ENCODE measurements at regions of chr1 and their contacts with region 1.

Region 1: DNA sequence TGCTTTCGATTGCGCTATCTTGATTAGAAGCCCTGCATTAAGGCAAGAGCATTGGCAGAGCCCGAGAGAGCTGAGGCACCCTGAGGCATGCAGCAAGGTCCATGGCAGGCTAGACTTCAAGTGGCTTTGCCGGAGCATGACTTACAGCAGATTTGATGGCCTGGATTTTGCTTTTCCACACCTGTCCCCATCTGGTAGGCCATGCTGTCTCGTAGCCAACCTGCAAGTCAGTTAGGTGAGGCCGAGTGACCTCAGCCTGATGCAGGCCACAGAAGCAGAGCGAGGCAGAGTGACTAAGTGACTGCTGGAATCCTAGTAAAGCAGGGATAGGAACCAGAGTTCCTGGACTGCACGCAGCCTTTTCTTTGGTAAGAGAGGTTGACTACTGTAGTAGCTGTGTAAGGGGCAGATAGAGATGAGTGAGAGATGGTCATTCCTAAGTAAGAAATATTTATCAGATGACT is 148.9 kb downstream of the PBX1 start:
- DNase-seq: no peak
- ATAC-seq: peak in 6 of 8 donors; percentile 22 to 79 (median 55)
- H3K4me3 ChIP-seq: no peak overlapping the region
- H3K27ac ChIP-seq: peak overlapping the region in 9 of 10 donors; percentile 10 to 71 (median 66)
- H3K4me1 ChIP-seq: peaks cover 19 to 89% (median 66%) of the 10 kb centered on the region in 9 donors
- H3K27me3 ChIP-seq: peaks cover 0 to 5% (median 0%) of the 10 kb centered on the region in 7 donors
- CTCF ChIP-seq: no peak

Region 2: DNA sequence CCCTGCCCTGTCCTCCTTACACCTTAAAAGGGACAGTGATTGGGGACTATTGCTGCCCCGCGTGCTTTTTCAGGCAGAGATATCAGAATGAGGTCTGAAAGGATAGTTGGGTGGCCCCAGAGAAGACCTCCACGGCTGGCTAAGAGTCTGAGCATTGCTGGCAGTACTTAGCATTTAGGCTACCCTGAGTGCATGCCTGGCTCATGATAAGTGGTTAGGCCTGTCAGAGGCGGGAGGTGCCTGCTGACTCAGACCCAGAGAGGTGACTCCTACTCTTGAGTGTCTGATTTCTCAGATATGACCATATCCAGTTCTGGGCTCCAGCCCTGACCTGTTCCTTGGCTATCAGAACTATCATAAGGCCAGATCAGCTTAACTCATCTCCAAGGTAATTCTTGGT is 64.7 kb after region 1 on chr1:
- intact Hi-C with region 1: loop called in 3 of 10 experiments (anchors 5 to 10 kb)
- DNase-seq: peak; percentile 45 to 55
- ATAC-seq: peak; percentile 66 to 94 (median 86)
- H3K4me3 ChIP-seq: no peak overlapping the region
- H3K27ac ChIP-seq: peak overlapping the region in 9 of 10 donors; percentile 1 to 73 (median 57)
- H3K4me1 ChIP-seq: peaks cover 9 to 77% (median 48%) of the 10 kb centered on the region in 9 donors
- H3K27me3 ChIP-seq: no peaks in the 10 kb centered on the region
- CTCF ChIP-seq: no peak

Region 3: GRCh38 chr1:164780863-164781262 is 73.0 kb after region 1 on chr1:
- intact Hi-C with region 1: loop called in 7 of 10 experiments (anchors 5 to 10 kb)
- DNase-seq: peak in 1 of 2 donors; percentile 24
- ATAC-seq: peak; percentile 40 to 93 (median 68)
- H3K4me3 ChIP-seq: no peak overlapping the region
- H3K27ac ChIP-seq: peak overlapping the region in 9 of 10 donors; percentile 35 to 80 (median 62)
- H3K4me1 ChIP-seq: peaks cover 12 to 67% (median 48%) of the 10 kb centered on the region in 9 donors
- H3K27me3 ChIP-seq: no peaks in the 10 kb centered on the region
- CTCF ChIP-seq: no peak

Region 4: GRCh38 chr1:164868990-164869389 is 161.1 kb after region 1 on chr1:
- intact Hi-C with region 1: no loop called
- DNase-seq: no peak
- ATAC-seq: no peak
- H3K4me3 ChIP-seq: no peak overlapping the region
- H3K27ac ChIP-seq: no peak overlapping the region
- H3K4me1 ChIP-seq: peaks cover 0 to 8% (median 0%) of the 10 kb centered on the region in 9 donors
- H3K27me3 ChIP-seq: no peaks in the 10 kb centered on the region
- CTCF ChIP-seq: no peak

Measured in heart right ventricle (tissue), 16 donors.